ENCODE measurements at regions of chr2 and their contacts with region 1.

Region 1: GRCh38 chr2:73828818-73829570 is at the start of gene STAMBP:
- DNase-seq: peak; percentile 73
- H3K4me3 ChIP-seq: peak within 1 kb of the TSS; percentile 81
- H3K27me3 ChIP-seq: no peaks in the 10 kb centered on the region; the same call in 1 of the 2 replicates
- CTCF ChIP-seq: no peak
- polyA plus RNA-seq, gene STAMBP: 47.9 and 48.4 TPM in 2 replicates

Region 2: DNA sequence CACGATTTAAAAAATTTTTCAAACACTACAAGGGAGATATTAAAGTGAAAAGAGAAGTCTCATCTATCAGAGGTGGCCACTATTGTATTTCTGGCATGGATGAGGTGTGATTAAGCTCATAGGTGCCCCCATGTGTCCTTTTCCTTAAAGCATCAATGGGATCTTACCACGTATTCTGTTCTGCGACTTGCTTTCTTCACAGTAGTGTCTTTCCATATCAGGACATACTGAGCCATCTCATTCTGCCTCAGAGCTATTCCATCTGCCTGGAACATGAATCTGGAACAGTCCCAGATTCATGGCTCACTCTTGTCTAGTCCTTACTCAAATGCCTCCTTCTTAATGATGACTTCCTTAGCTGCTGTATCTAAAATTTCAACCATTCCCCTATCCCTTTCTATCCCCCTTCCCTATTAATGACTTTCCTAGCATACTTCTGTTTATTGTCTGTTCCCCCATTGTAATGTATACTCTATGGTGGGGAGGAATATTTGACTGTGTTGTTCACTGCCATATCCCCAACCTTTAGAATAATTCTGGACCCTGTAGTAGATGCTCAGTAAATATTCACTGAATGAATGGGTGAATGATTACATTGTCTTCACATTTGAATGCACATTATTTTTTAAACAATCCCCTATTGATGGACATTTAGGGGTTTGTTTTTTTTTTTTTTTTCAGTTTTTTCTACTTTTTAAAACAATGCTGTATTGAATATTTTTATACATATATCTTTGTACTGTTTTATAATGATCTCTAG is 10.8 kb after region 1 on chr2:
- CTCF ChIA-PET with region 1: interaction called, 15 read pairs
- POLR2A ChIA-PET with region 1: no interaction called
- DNase-seq: no peak
- H3K4me3 ChIP-seq: no peak overlapping the region
- H3K27me3 ChIP-seq: no peaks in the 10 kb centered on the region
- CTCF ChIP-seq: no peak

Region 3: DNA sequence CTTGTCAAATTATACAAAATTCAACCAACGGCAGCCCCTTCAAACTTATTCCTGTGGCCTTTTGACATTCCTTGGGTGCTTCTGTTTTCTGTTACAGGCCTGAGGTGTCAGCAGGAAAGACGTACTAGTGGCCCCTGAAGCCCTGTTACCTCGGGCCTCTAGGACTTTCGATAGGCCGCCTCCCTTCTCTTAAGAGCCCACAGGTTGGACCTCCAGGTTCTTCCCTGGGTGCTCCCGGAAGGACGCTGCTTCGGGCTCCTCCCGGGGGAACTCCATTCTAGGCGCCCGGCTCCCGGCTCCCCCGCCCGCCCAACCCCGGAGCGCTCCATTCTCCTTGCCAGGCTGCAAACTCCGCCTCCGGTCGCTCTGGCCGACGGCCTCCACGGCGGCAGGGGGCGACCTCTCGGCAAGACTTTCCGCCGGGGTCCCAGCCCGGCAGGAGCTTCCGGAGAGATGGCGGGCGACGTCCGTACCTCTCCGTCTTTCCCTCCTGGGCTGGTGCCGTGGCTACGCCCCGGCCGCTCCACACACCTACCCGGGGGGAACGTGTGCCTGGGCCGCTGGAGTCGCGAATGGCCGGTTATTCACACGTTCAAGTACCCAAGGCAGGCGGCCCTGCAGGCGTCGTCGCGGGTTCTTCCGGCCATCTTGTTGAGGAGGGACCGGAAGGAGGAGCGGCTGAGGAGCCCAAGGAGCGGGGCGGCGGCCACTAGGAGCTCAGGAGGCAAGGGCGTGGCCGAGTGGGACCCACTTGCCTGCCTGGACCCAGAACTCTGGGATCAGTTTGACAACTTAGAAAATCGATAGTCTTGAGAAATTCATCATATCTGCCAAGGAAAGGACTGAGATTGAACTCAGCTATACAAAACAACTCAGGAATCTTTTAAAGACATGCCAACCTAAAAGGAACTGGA is 291.2 kb after region 1 on chr2:
- CTCF ChIA-PET with region 1: interaction called, 10 read pairs
- POLR2A ChIA-PET with region 1: interaction called, 5 read pairs
- DNase-seq: peak; percentile 31
- H3K4me3 ChIP-seq: peak overlapping the region; percentile 80
- H3K27me3 ChIP-seq: no peaks in the 10 kb centered on the region; the same call in 1 of the 2 replicates
- CTCF ChIP-seq: peak; percentile 70

Region 4: GRCh38 chr2:74261204-74261864 is 432.3 kb after region 1 on chr2:
- CTCF ChIA-PET with region 1: interaction called, 13 read pairs
- POLR2A ChIA-PET with region 1: no interaction called
- DNase-seq: no peak
- H3K4me3 ChIP-seq: no peak overlapping the region
- H3K27me3 ChIP-seq: peaks cover 11% of the 10 kb centered on the region
- CTCF ChIP-seq: peak; percentile 64

Region 5: DNA sequence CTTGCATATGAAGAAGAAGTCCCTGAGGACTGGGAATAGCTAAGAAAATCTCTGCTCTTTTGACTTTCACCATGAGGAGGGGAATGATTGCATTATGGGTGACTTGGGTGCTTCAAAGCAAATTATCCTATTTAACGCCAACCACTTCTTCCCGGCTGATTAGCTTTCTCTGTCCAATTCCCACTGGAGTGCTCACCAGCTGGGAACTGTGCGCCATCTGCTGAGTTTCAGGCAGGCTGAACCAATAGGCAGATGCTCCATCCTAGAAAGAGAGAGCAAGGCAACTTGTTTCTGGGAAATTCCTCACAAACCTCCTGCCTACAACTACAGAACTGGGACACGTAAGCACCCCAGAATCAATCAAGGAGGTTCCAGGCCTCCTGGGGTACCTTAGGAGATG is 1178.8 kb after region 1 on chr2:
- CTCF ChIA-PET with region 1: no interaction called
- POLR2A ChIA-PET with region 1: no interaction called
- DNase-seq: no peak
- H3K4me3 ChIP-seq: no peak overlapping the region
- H3K27me3 ChIP-seq: no peaks in the 10 kb centered on the region
- CTCF ChIP-seq: no peak

Measured in BJ (cell line).